ENCODE measurements at regions of chr4 and their contacts with region 1.

Region 1: GRCh38 chr4:77862478-77863216 is at the start of gene MRPL1:
- DNase-seq: peak; percentile 68 to 95 (median 92)
- ATAC-seq: peak; percentile 87
- H3K4me3 ChIP-seq: peak within 1 kb of the TSS; percentile 76
- H3K4me3 Mint-ChIP-seq: peak within 1 kb of the TSS; percentile 92 to 99 (median 96)
- H3K27ac ChIP-seq: peak within 1 kb of the TSS; percentile 99
- H3K27ac Mint-ChIP-seq: peak within 1 kb of the TSS; percentile 97 to 100 (median 99)
- H3K4me1 ChIP-seq: peaks cover 24 to 31% of the 10 kb centered on the region in 2 donors
- H3K4me1 Mint-ChIP-seq: peaks cover 33 to 88% (median 71%) of the 10 kb centered on the region in 7 donors
- H3K27me3 ChIP-seq: no peaks in the 10 kb centered on the region
- H3K27me3 Mint-ChIP-seq: peaks cover 0 to 4% (median 0%) of the 10 kb centered on the region in 5 donors
- total RNA-seq, gene MRPL1: 13.0 to 37.9 (median 17.8) TPM

Region 2: GRCh38 chr4:76148142-76148865 is 1714.3 kb before region 1 on chr4 and contains the start of gene NUP54:
- CTCF ChIA-PET with region 1: no interaction called
- POLR2A ChIA-PET with region 1: interaction called, 4 read pairs
- intact Hi-C with region 1: loop called (anchors 1 to 2 kb)
- DNase-seq: peak; percentile 85 to 96 (median 92)
- ATAC-seq: peak; percentile 99
- H3K4me3 ChIP-seq: peak within 1 kb of the TSS; percentile 85
- H3K4me3 Mint-ChIP-seq: peak within 1 kb of the TSS; percentile 90 to 100 (median 96)
- H3K27ac ChIP-seq: peak within 1 kb of the TSS; percentile 93
- H3K27ac Mint-ChIP-seq: peak within 1 kb of the TSS; percentile 91 to 99 (median 94)
- H3K4me1 ChIP-seq: peaks cover 12% of the 10 kb centered on the region in 2 donors
- H3K4me1 Mint-ChIP-seq: peaks cover 21 to 52% (median 45%) of the 10 kb centered on the region in 7 donors
- H3K27me3 ChIP-seq: no peaks in the 10 kb centered on the region
- H3K27me3 Mint-ChIP-seq: no peaks in the 10 kb centered on the region
- total RNA-seq, gene NUP54: 51.1 to 82.0 (median 65.5) TPM

Region 3: GRCh38 chr4:77586951-77587383 is 275.7 kb before region 1 on chr4:
- CTCF ChIA-PET with region 1: no interaction called
- POLR2A ChIA-PET with region 1: no interaction called
- intact Hi-C with region 1: loop called in 1 of 2 experiments (anchors 1 kb)
- DNase-seq: peak in 2 of 9 donors; percentile 8 to 64
- ATAC-seq: peak; percentile 89
- H3K4me3 ChIP-seq: no peak overlapping the region
- H3K4me3 Mint-ChIP-seq: peak overlapping the region in 1 of 10 donors; percentile 64
- H3K27ac ChIP-seq: no peak overlapping the region
- H3K27ac Mint-ChIP-seq: peak overlapping the region in 2 of 9 donors; percentile 10 to 75
- H3K4me1 ChIP-seq: no peaks in the 10 kb centered on the region
- H3K4me1 Mint-ChIP-seq: peaks cover 0 to 33% (median 9%) of the 10 kb centered on the region in 7 donors
- H3K27me3 ChIP-seq: no peaks in the 10 kb centered on the region
- H3K27me3 Mint-ChIP-seq: peaks cover 0 to 9% (median 0%) of the 10 kb centered on the region in 5 donors

Region 4: DNA sequence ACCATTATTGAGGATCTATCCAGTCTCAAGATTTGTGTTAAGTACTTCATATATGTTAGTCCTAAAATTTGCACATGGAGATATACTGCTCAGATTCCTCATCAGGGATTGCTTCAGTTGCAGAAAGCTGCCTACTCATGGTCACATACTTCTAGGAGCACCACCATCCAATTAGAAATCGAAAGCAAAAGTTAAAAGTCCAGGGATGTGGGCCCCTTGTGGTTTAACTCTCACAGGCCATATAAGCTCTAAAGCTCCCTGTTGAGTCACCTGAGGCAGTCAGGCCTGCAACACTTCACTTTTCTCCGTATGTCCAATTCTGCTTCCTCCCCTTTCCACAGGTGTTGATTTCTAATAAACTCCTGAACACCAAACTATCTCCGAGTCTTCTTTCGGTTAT is 127.7 kb before region 1 on chr4:
- CTCF ChIA-PET with region 1: no interaction called
- POLR2A ChIA-PET with region 1: interaction called, 6 read pairs
- intact Hi-C with region 1: loop called (anchors 2 to 5 kb)
- DNase-seq: peak in 8 of 9 donors; percentile 9 to 34 (median 18)
- ATAC-seq: peak; percentile 80
- H3K4me3 ChIP-seq: no peak overlapping the region
- H3K4me3 Mint-ChIP-seq: peak overlapping the region in 9 of 10 donors; percentile 53 to 83 (median 71)
- H3K27ac ChIP-seq: peak overlapping the region; percentile 25
- H3K27ac Mint-ChIP-seq: peak overlapping the region; percentile 18 to 90 (median 81)
- H3K4me1 ChIP-seq: peaks cover 14 to 17% of the 10 kb centered on the region in 2 donors
- H3K4me1 Mint-ChIP-seq: peaks cover 36 to 85% (median 73%) of the 10 kb centered on the region in 7 donors
- H3K27me3 ChIP-seq: no peaks in the 10 kb centered on the region
- H3K27me3 Mint-ChIP-seq: no peaks in the 10 kb centered on the region

Region 5: DNA sequence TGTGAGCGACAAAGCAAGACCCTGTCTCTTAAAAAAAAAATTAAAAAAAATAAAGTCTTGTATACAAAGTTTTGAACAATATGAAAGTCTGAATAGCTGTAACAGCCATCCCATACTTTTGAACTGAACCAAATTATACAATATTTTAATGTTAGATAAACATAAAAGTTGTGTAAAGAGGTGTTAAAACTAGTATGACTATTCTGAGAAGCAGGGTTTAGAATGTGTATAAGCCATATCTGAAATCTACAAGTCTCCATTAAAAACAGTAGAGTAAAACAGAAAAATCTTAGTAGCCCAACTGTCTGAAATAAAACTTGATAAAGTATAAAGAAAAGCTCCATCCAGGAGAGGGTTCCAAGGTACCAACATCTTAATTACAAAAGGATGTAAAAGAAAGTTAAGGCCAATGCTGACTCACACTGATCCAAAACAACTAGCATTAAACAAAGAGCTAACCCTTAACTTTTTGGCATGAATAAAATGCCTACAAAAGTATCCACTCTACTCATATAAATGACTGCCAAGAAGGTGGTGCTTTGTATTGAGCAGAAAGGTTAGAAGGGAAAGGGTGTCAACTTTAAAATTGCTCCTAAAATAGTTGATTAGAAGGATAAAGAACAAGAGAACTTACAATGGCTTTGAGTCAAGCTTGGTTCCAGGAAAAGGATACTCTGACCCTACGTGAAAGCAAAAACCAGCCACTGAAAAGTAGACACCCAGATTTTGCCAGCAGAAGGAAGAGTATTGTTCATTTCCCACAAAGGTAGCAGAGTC is 62.0 kb before region 1 on chr4:
- CTCF ChIA-PET with region 1: interaction called, 3 read pairs
- POLR2A ChIA-PET with region 1: interaction called, 34 read pairs
- intact Hi-C with region 1: loop called in 1 of 2 experiments (anchors 1 kb)
- DNase-seq: no peak
- ATAC-seq: peak; percentile 23
- H3K4me3 ChIP-seq: peak overlapping the region; percentile 35
- H3K4me3 Mint-ChIP-seq: peak overlapping the region; percentile 43 to 85 (median 79)
- H3K27ac ChIP-seq: peak overlapping the region; percentile 70
- H3K27ac Mint-ChIP-seq: peak overlapping the region; percentile 65 to 91 (median 84)
- H3K4me1 ChIP-seq: peaks cover 51 to 74% of the 10 kb centered on the region in 2 donors
- H3K4me1 Mint-ChIP-seq: peaks cover 47 to 98% (median 77%) of the 10 kb centered on the region in 7 donors
- H3K27me3 ChIP-seq: no peaks in the 10 kb centered on the region
- H3K27me3 Mint-ChIP-seq: no peaks in the 10 kb centered on the region

Region 6: DNA sequence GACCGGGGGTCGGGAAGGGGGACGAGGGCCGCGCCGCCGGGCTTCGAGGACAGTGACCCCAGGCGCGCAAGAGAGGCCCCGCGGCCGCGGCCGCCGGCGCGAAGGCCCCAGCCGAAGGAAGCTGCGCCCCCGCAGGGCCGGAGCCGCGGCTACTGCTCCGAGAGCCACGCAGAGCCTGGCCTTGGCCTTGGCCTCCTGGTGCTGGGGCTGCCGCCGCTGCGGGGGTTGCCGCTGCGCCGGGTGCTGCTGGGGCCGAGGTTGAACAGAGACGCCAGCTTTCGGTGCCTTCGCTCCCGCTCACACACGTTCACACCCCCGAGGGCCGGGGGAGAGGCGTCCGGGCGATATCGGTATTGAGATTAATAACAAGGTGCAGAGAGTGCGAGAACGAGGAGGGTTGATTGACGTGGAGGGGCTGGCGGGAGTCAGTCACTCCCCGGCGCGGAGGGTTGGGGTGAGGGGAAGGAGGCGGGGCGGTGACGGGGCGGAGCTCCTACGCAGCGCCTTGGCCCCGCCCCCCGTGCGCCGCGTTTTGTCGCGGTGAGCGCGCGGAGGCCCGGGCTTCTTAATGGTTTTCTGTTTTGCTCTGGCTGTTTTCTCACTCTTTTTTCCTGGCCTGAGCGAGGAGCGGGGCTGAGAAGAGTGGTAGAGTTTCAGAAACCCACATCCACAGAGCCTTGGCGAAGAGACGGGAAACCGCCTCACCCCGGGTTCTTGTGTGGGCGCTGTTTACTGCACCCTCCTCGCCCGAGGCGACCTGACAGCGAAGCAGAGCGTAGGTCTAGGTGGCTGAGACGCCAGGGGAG is 42.6 kb before region 1 on chr4:
- CTCF ChIA-PET with region 1: interaction called, 29 read pairs
- POLR2A ChIA-PET with region 1: interaction called, 531 read pairs
- intact Hi-C with region 1: loop called (anchors 1 kb)
- DNase-seq: peak; percentile 95 to 99 (median 98)
- ATAC-seq: peak; percentile 87
- H3K4me3 ChIP-seq: peak overlapping the region; percentile 93
- H3K4me3 Mint-ChIP-seq: peak overlapping the region; percentile 93 to 99 (median 96)
- H3K27ac ChIP-seq: peak overlapping the region; percentile 100
- H3K27ac Mint-ChIP-seq: peak overlapping the region; percentile 88 to 100 (median 99)
- H3K4me1 ChIP-seq: peaks cover 39 to 42% of the 10 kb centered on the region in 2 donors
- H3K4me1 Mint-ChIP-seq: peaks cover 37 to 69% (median 53%) of the 10 kb centered on the region in 7 donors
- H3K27me3 ChIP-seq: no peaks in the 10 kb centered on the region
- H3K27me3 Mint-ChIP-seq: peaks cover 0 to 2% (median 0%) of the 10 kb centered on the region in 5 donors

Region 7: DNA sequence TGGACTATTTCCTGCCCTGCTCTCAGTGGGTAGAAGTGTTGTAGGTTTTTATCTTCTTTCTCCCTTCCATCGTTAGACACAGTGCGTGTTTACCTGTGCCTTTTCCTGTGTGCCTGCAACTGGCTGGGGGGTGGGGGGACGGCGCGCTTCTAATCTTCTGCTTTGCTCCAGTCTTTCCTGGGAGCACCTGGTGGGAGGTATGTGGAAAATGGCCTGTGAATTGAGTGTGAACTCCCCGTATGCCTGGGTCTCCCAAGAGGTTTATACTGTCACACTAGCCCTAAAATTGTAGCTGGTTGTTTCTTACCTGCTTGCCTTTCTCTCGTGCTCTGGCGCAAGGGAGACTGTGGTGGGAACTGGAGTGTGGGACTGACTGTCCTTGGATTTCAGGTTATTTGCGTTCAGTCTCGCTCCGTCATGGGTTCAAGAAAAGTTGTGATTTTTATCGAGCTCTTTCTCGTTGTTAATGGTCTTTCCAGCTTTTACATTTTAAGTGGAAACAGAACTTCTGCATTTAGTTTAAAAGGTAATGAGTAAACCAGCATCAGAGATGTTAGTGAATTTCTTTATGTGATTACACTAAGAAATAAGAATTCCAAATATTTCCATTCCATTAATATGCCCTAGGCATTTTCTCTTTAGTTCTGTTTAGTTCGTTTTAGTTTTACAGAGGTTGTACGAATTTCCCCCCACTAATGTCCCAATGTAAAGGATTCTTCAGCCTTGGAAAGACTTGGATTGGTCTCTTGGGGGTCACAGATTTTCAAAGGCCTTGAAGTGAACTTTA is 15.3 kb after region 1 on chr4:
- CTCF ChIA-PET with region 1: no interaction called
- POLR2A ChIA-PET with region 1: interaction called, 6 read pairs
- intact Hi-C with region 1: loop called in 1 of 2 experiments (anchors 2 kb)
- DNase-seq: no peak
- ATAC-seq: no peak
- H3K4me3 ChIP-seq: no peak overlapping the region
- H3K4me3 Mint-ChIP-seq: no peak overlapping the region
- H3K27ac ChIP-seq: no peak overlapping the region
- H3K27ac Mint-ChIP-seq: peak overlapping the region in 3 of 9 donors; percentile 6 to 47 (median 24)
- H3K4me1 ChIP-seq: peaks cover 0 to 6% of the 10 kb centered on the region in 2 donors
- H3K4me1 Mint-ChIP-seq: peaks cover 8 to 53% (median 36%) of the 10 kb centered on the region in 7 donors
- H3K27me3 ChIP-seq: no peaks in the 10 kb centered on the region
- H3K27me3 Mint-ChIP-seq: no peaks in the 10 kb centered on the region

Measured in naive thymus-derived CD4-positive, alpha-beta T cell (primary cell).